ENCODE measurements at regions of chr2 and their contacts with region 1.

Region 1: GRCh38 chr2:83069724-83070123 is 1389.4 kb downstream of the SUCLG1 start:
- DNase-seq: no peak
- H3K4me3 ChIP-seq: no peak overlapping the region
- CTCF ChIP-seq: no peak
- POLR2A ChIP-seq: no peak

Region 2: GRCh38 chr2:82507657-82508056 is 562.1 kb before region 1 on chr2:
- intact Hi-C with region 1: no loop called
- DNase-seq: no peak
- H3K4me3 ChIP-seq: no peak overlapping the region
- CTCF ChIP-seq: no peak
- POLR2A ChIP-seq: no peak

Region 3: GRCh38 chr2:83817511-83817910 is 747.8 kb after region 1 on chr2:
- intact Hi-C with region 1: loop called (anchors 10 kb)
- DNase-seq: no peak
- H3K4me3 ChIP-seq: no peak overlapping the region
- CTCF ChIP-seq: no peak
- POLR2A ChIP-seq: no peak

Measured in lower leg skin (tissue), 4 donors.